AG04450 (cell line): ENCODE measurements at regions of chr20 and their contacts with region 1.

Region 1: DNA sequence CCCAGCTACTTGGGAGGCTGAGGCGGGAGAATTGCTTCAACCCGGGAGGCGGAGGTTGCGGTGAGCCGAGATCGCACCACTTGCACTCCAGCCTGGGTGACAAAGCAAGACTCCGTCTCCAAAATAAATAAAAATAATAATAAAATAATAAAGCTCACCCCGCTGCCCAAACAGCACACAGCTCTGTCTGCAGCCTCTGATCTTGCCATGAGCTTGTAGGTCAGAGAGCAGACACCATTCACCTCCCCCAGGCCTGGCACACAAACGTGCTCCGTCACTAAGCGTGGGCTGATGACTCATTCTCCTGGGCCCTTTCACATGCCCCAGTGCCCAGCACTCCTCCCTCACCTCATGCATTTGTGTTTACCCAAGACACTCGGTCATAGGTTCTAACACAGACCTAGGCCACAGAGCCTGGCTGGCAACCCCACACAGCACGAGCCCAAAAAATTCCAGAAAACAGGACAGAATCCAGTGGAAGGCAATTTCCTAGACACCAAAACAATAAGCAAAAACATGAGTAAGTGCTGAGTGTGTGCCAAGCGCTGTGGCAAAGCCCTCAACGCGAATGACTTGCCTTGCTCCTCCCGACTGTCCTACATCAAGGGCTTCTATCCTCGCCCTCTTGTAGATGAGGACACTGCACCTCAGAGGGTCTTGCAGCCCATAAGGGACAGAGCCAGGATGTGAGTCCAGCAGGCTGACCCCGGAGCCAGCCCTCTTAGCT is 18.0 kb downstream of the ATP9A start:
- DNase-seq: peak; percentile 76
- H3K4me3 ChIP-seq: no peak overlapping the region
- H3K27ac ChIP-seq: peak overlapping the region; percentile 88
- H3K27me3 ChIP-seq: no peaks in the 10 kb centered on the region
- CTCF ChIP-seq: no peak

Region 2: DNA sequence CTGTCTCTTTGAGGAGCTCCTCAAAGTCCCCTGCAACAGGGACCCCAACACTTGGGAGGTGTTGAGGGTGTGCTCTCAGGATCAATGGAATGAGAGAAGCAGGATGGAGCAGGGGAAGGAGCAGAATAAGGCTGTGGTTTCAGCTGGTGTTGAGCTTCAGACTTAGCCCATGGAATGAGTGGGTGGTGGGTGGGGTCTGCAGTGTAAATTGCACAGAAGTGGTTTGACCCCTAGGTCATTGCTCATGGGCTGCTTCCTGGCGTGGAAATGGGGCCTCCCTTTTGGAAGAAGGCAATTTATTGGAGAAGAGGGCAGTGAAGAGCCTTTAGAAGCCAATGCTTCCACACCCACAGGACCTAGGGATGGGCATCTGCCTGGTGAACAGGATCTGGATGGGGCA is 690.3 kb before region 1 on chr20:
- CTCF ChIA-PET with region 1: no interaction called
- POLR2A ChIA-PET with region 1: no interaction called
- DNase-seq: no peak
- H3K4me3 ChIP-seq: no peak overlapping the region
- H3K27ac ChIP-seq: no peak overlapping the region
- H3K27me3 ChIP-seq: peaks cover 28% of the 10 kb centered on the region
- CTCF ChIP-seq: no peak

Region 3: GRCh38 chr20:51469578-51470498 is 280.4 kb before region 1 on chr20:
- CTCF ChIA-PET with region 1: no interaction called
- POLR2A ChIA-PET with region 1: no interaction called
- DNase-seq: no peak
- H3K4me3 ChIP-seq: no peak overlapping the region
- H3K27ac ChIP-seq: no peak overlapping the region
- H3K27me3 ChIP-seq: no peaks in the 10 kb centered on the region
- CTCF ChIP-seq: no peak

Region 4: GRCh38 chr20:51763965-51764602 is 13.9 kb after region 1 on chr20:
- CTCF ChIA-PET with region 1: interaction called, 12 read pairs
- POLR2A ChIA-PET with region 1: interaction called, 3 read pairs
- DNase-seq: no peak
- H3K4me3 ChIP-seq: no peak overlapping the region
- H3K27ac ChIP-seq: no peak overlapping the region
- H3K27me3 ChIP-seq: no peaks in the 10 kb centered on the region
- CTCF ChIP-seq: 0 out of 2 replicates have a peak, but pooled peaks have one; percentile 18